Heart left ventricle (tissue), 16 donors: ENCODE measurements at regions of chr14 and their contacts with region 1.

Region 1: DNA sequence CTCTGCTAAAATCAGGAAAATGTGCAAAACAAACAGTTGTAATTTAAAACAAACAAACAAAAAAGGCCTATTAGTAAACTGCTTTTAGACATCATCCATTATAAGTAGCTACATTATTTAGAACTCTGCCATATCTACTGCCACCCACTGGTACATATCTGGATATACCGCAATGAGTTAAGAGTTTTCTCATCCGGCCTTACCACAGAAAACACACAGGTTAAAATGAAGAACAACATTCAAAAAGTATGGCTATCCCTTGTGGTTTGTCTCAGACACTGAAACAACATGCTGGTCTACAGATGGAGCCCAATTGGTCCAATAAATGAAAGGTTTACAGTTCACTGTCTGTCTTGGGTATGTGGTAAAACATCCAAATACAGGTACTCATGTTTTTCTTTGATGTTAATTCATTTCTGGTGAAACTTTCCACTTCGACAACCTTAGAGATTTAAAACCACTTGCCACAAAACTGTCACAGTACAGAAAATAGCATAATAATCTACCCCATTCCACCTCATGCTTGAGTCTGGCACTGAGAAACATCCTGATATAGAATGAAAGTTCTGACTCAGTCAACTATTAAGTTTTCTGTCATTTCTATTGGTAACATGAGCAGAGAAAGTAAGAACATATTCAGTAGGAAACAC is 354.3 kb downstream of the CEP128 start:
- DNase-seq: no peak
- ATAC-seq: no peak
- H3K4me3 ChIP-seq: no peak overlapping the region
- H3K27ac ChIP-seq: no peak overlapping the region
- H3K4me1 ChIP-seq: peaks cover 0 to 18% (median 0%) of the 10 kb centered on the region in 12 donors
- H3K27me3 ChIP-seq: no peaks in the 10 kb centered on the region
- CTCF ChIP-seq: peak in 10 of 12 donors; percentile 11 to 52 (median 28)
- POLR2A ChIP-seq: no peak

Region 2: GRCh38 chr14:80310938-80311750 is 276.1 kb before region 1 on chr14:
- intact Hi-C with region 1: loop called in 1 of 10 experiments (anchors 10 kb)
- DNase-seq: peak in 1 of 5 donors; percentile 22
- ATAC-seq: peak; percentile 48 to 85 (median 67)
- H3K4me3 ChIP-seq: no peak overlapping the region
- H3K27ac ChIP-seq: peak overlapping the region in 8 of 12 donors; percentile 8 to 51 (median 40)
- H3K4me1 ChIP-seq: peaks cover 0 to 20% (median 0%) of the 10 kb centered on the region in 12 donors
- H3K27me3 ChIP-seq: no peaks in the 10 kb centered on the region
- CTCF ChIP-seq: no peak
- POLR2A ChIP-seq: no peak

Region 3: DNA sequence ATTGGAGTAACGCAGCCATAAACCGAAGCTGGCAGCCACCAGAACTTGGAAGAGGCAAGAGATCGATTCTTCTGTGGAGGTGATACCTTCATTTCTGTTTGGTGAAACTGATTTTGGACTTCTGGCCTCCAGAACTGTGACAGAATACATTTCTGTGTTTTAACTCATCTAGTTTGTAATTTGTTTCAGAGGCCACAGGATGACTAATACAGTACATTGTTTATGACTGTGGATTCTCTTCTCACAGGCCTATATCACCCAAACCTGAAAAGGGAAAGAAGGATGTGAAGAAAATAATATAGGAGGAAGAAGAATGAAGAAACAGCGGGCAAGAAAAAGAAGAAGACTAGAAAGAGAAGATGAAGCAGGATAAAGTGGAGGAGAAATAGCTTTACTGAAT is 112.1 kb before region 1 on chr14:
- intact Hi-C with region 1: no loop called
- DNase-seq: no peak
- ATAC-seq: no peak
- H3K4me3 ChIP-seq: no peak overlapping the region
- H3K27ac ChIP-seq: no peak overlapping the region
- H3K4me1 ChIP-seq: peaks cover 0 to 12% (median 0%) of the 10 kb centered on the region in 12 donors
- H3K27me3 ChIP-seq: no peaks in the 10 kb centered on the region
- CTCF ChIP-seq: no peak
- POLR2A ChIP-seq: no peak

Region 4: GRCh38 chr14:80658733-80659132 is 71.5 kb after region 1 on chr14:
- intact Hi-C with region 1: no loop called
- DNase-seq: no peak
- ATAC-seq: no peak
- H3K4me3 ChIP-seq: no peak overlapping the region
- H3K27ac ChIP-seq: no peak overlapping the region
- H3K4me1 ChIP-seq: no peaks in the 10 kb centered on the region
- H3K27me3 ChIP-seq: no peaks in the 10 kb centered on the region
- CTCF ChIP-seq: no peak
- POLR2A ChIP-seq: no peak